ENCODE measurements at regions of chr17 and their contacts with region 1.

Region 1: DNA sequence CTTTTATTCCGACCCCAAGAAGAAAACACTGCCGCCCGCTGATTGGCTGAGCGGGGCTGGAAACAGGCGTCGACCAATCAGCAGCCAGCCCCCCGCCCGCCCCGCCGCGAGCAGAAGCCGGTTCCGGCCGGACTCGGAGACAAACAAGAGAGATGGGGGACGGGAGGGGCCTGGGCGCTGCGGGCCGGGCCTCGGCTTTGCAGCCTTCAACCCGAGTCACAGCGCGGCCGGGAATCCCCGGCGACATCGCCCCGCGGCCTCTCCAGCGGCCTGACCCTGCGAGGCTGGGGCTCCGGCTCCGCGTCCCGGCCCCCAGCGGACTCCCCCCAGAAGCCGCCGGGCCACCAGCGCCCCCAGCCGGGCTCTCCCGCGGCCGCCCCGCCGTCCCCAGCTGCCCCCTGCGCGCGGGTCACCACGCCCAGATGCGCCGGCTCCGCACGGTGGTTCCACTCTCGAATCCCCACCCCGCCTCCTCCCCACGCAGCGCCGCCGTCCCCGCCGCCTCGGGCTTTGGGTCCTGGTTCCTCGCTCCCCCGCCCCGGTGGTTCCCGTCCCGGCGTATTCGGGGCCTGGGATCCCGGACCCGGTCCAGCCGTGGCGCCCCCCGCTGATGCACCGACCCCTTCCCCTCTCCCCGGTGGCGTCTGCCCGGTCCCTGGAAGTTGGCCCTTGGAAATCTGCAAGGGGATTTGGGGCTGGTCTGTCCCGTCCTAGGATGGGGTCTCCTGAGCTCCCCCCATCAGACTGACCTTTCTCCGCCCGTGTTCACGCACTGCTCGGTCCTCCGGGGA is 417 bp upstream of the SLC43A2 start:
- DNase-seq: peak; percentile 95
- ATAC-seq: peak; percentile 90

Region 2: GRCh38 chr17:1216217-1217088 is 412.6 kb before region 1 on chr17:
- intact Hi-C with region 1: no loop called
- DNase-seq: no peak
- ATAC-seq: no peak

Region 3: GRCh38 chr17:1577182-1577581 is 51.9 kb before region 1 on chr17:
- intact Hi-C with region 1: loop called (anchors 5 kb)
- DNase-seq: peak; percentile 91
- ATAC-seq: peak; percentile 90

Region 4: DNA sequence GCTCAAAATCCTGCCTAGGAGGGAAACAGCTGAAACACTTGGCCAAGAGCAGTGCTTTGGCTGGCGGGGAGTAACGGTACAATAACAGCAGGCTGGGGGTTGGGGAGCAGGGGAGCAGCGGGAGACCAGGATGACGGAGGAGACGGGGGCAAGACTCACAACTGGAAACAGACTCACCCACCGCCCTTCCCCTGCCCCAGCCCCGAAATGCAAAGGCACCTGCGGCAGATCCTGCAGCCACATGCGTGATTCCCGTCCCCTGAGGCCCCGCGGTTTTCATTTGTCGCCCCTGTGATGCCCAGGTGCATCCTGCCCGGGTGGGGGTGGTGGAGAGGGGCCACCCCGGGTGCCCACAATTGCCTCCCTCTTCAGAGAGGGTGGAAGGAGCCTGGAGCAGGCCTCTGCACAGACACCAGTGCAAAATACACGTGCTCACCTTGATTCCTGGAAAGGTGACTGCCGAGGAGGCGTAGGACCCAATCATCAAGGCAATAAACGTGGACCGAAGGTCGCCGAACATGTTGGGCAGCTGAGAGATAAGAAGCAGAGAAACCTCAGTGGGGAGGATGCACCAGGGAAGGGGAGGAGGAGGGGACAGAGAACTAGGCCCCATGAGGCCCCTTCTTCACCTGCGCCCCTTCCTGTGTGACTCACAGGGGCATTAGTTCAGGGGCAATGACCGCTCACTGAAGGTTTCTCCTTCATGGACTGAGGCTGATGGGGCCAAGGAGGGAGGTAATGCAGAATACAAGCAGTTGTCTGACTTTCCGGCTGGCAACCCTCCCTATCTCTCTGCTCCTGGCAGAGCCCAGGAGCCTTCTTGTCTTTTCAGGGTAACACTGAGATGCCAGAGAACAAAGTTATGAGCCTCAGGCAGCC is 36.1 kb before region 1 on chr17:
- intact Hi-C with region 1: no loop called
- DNase-seq: no peak
- ATAC-seq: no peak

Region 5: DNA sequence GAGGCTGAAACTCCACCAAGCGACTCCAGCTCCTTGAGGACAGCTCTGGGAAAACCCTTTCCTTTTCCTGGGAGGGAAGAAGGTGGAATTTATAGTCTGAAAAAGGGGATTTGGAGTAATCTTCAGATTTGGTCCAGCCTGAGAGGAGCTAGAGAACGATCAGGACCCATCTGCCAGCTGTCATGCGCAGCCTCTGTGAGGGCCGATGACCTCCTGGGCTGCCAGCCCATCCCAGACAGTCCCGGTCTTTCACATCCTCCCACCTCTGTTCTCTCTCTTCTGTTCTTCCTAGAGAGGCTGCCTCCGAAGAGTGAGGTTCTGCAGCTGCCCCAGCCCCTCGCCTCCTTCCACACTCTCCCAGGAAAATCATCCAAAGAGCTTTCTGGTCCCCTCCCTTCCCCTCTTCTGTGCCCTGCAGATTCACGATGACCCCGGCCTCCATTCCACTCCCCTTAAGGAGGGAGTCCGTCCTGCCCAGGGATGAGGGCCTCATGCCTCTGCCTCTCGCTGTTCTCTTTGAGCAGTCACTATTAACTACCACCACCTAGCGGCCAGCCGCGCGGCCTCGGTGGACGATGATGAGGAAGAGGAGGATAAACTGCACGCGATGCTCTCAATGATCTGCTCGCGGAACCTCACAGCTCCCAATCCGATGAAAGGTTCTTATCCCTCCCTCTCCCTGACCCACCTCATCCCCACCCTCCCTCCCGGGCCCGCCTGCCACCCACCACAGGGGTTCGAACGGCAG is 737.9 kb after region 1 on chr17:
- intact Hi-C with region 1: no loop called
- DNase-seq: no peak
- ATAC-seq: no peak

Measured in left ventricle myocardium superior (tissue), 1 donor.